ENCODE measurements at regions of chr7 and their contacts with region 1.

Region 1: DNA sequence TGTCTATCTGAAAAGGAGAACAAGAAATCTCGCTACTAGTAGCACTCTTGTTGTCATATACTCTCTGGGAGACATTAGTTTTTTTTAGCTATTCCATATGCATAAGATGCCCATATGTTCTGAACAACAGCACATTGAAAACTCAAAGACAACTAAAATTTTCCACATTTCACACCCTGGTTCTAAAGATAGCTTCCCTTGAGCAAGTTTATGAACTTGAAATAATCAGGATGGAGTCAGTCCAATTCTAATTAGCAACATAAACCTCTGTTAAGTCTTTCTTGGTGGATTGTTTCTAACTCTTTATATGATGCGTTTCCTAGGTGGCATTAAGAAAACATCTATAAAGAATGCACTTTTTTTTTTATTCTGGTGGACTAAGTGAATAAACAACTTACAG is 1095.3 kb downstream of the GRM8 start:
- DNase-seq: no peak
- H3K4me3 ChIP-seq: no peak overlapping the region
- H3K27ac ChIP-seq: no peak overlapping the region
- H3K4me1 ChIP-seq: no peaks in the 10 kb centered on the region
- H3K27me3 ChIP-seq: no peaks in the 10 kb centered on the region
- CTCF ChIP-seq: no peak

Region 2: DNA sequence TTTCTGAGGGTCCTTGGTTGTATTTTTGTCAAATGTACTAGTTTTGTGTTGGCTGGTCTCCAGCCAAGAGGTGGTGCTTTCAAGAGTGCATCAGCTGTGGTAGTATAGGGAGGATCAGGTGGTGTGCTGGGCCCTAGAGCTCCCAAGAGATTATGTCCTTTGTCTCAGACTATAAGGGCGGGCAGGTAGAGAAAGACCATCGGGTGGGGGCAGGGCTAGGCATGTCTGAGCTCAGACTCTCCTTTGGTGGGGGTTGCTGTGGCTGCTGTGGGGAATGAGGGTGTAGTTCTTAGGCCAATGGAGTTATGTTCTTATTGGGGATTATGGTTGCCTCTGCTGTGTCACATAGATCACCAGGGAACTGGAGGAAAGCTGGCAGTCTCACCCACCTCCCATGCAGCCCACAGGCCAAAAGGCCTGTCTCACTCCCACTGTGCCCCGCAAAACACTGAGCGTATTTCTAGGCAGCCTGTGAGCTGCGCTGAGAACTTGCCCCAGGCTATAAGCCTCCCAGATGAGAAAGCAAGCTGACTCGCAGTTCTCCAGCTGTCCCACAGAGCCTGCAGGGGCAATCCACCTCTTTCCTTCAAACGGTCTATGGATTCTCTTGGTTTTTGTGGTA is 28.7 kb after region 1 on chr7:
- CTCF ChIA-PET with region 1: interaction called, 12 read pairs
- POLR2A ChIA-PET with region 1: no interaction called
- intact Hi-C with region 1: no loop called
- DNase-seq: no peak
- H3K4me3 ChIP-seq: no peak overlapping the region
- H3K27ac ChIP-seq: no peak overlapping the region
- H3K4me1 ChIP-seq: no peaks in the 10 kb centered on the region
- H3K27me3 ChIP-seq: no peaks in the 10 kb centered on the region
- CTCF ChIP-seq: no peak

Region 3: GRCh38 chr7:126302639-126303038 is 145.2 kb after region 1 on chr7:
- CTCF ChIA-PET with region 1: no interaction called
- POLR2A ChIA-PET with region 1: no interaction called
- intact Hi-C with region 1: no loop called
- DNase-seq: no peak
- H3K4me3 ChIP-seq: no peak overlapping the region
- H3K27ac ChIP-seq: no peak overlapping the region
- H3K4me1 ChIP-seq: no peaks in the 10 kb centered on the region
- H3K27me3 ChIP-seq: no peaks in the 10 kb centered on the region
- CTCF ChIP-seq: 0 out of 2 replicates have a peak, but pooled peaks have one; percentile 24